Dorsolateral prefrontal cortex (tissue), 120 donors: ENCODE measurements at regions of chr1 and their contacts with region 1.

Region 1: GRCh38 chr1:61337981-61338848 is 255.9 kb downstream of the NFIA start:
- DNase-seq: peak; percentile 46 to 89 (median 79)
- H3K4me3 ChIP-seq: peak overlapping the region in 54 of 59 donors; percentile 0 to 59 (median 26)
- H3K27ac ChIP-seq: peak overlapping the region; percentile 17 to 88 (median 74)
- H3K27me3 ChIP-seq: no peaks in the 10 kb centered on the region
- CTCF ChIP-seq: peak; percentile 66 to 95 (median 87)

Region 2: DNA sequence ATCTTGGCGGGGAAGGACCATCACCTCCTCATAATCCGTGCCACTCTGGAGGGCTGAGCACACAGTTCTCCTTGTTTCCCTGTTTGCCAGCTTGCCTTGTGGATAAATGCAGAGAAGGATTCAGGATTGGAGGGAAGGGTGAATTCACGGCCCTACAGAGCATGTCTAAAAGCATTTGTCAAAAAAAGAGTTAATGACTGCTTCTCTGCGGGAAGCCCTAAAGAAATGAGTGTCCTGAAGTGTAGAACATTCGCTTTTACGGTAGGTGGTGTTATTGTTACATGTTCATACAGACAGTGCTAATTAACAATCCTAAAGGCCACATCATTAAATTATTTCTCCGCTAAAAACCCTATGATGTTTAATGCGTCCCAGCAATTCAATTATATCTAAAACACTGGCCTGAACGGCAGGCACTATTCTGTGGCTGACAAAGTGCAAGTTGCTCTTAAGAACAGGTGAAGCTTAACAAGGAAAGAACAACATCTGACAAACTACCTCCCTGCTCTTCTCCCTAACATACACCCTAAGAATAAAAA is 368.2 kb before region 1 on chr1:
- intact Hi-C with region 1: loop called (anchors 2 to 10 kb)
- DNase-seq: peak in 1 of 10 donors; percentile 4
- H3K4me3 ChIP-seq: peak overlapping the region in 38 of 59 donors; percentile 4 to 57 (median 24)
- H3K27ac ChIP-seq: peak overlapping the region in 53 of 59 donors; percentile 7 to 90 (median 72)
- H3K27me3 ChIP-seq: no peaks in the 10 kb centered on the region
- CTCF ChIP-seq: peak; percentile 27 to 86 (median 66)

Region 3: DNA sequence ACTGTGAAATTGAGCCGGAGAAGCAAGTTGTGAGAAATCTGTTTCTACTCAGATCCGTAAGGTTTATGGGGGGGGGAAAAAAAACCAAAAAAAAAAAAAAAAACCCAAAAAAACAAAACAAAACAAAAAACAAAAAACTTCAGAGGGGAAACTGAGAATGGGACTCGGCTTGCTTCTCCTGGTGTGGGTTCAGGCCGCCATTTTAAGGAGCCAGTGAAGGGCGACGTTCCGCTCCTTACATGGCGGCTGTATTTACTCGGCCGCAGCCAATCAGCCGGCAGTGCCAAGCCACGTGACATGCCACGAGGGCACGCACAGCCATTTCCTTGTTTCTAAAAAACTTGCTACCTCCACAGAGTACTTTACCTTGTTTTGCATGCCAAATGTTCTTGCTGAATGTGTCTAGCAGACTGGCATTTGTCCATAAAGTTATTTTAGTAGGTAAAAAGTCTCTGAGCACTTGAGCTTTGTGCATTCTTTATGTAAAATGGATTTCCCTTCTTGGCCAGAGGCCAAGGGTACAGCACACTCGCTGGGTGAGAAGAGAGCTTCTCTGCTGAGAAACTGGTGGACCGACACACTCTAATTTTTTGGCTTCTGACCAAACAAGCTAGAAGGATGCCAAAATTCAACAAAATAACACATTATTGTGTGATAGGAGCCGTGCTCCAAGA is 154.0 kb before region 1 on chr1:
- intact Hi-C with region 1: loop called in 1 of 2 experiments (anchors 5 kb)
- DNase-seq: peak; percentile 86 to 97 (median 94)
- H3K4me3 ChIP-seq: peak overlapping the region; percentile 39 to 73 (median 56)
- H3K27ac ChIP-seq: peak overlapping the region; percentile 83 to 98 (median 96)
- H3K27me3 ChIP-seq: no peaks in the 10 kb centered on the region
- CTCF ChIP-seq: peak in 11 of 56 donors; percentile 1 to 19 (median 14)

Region 4: DNA sequence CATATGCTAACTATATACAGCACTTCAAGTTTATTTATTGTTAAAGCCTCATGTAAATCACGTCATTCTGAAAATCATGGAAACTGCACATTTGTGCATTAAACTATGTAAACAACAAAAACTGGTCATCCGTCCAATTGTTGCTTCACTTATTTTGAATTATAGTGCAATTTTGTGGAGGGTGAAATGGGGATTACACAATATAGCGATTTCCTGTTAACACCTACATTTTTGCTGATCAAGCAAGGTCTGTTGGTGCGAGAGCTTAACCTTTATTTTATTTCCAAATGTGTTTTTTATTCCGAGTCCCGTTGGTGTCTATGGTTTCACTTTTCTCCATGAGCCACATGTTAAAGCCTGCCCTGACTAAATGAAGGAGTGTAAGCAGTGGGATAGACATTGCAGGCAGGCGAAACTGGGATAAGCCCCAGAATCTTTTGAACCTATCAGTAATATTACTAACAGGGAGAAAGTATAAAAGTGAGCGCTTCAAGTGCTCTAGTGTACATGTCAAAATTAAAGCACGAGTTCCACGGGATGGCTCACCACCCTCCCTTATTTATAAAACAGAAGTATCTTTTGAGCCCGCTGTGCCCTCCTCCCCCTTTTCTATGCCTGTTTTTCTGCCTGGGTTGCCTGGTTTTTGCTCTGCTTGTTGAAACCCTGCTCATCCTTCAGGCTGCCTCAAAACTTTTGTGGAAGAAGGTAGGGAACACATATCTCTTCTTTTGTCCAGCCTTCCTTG is 135.2 kb before region 1 on chr1:
- intact Hi-C with region 1: no loop called
- DNase-seq: no peak
- H3K4me3 ChIP-seq: peak overlapping the region in 47 of 59 donors; percentile 3 to 56 (median 30)
- H3K27ac ChIP-seq: peak overlapping the region in 26 of 59 donors; percentile 1 to 66 (median 34)
- H3K27me3 ChIP-seq: no peaks in the 10 kb centered on the region
- CTCF ChIP-seq: no peak

Region 5: DNA sequence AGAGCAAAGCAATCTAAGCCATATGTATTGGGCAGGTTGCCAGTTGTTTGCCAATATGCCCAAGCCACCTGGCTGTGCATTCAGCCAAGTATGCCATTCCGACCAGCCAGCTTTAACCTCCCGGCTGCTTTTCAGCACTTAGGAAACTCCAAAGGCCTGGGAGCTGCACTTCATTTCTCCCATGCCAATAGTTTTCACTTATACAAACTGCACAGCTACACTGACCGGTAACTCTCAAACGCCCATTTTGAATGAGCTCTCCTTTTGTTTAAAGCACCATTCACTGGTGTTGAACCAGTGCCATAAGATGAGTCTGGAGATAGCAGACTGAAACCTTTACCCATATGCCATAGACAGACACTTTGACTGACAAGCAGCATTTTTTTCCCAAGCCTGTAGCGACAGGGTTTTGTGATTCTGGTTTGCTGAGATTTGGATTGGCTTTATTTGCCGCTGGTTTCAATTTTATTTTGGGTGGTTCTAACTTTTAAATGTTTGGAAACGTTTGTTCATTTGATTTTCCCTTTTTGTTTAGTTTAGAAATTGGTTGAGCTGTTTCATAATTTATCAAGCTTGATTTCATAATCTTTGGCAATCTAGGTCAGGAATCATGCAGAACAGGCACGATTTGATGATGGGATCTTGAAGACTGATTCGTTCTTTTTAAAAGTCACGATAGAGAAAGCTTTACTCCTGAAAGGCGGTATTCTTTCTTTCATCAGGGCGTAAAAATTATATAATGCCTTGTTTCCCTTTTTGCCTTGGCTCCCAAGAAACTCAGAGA is 111.2 kb before region 1 on chr1:
- intact Hi-C with region 1: loop called in 1 of 2 experiments (anchors 10 kb)
- DNase-seq: peak in 1 of 10 donors; percentile 80
- H3K4me3 ChIP-seq: peak overlapping the region in 6 of 59 donors; percentile 8 to 26 (median 14)
- H3K27ac ChIP-seq: peak overlapping the region in 18 of 59 donors; percentile 1 to 63 (median 27)
- H3K27me3 ChIP-seq: no peaks in the 10 kb centered on the region
- CTCF ChIP-seq: no peak

Region 6: DNA sequence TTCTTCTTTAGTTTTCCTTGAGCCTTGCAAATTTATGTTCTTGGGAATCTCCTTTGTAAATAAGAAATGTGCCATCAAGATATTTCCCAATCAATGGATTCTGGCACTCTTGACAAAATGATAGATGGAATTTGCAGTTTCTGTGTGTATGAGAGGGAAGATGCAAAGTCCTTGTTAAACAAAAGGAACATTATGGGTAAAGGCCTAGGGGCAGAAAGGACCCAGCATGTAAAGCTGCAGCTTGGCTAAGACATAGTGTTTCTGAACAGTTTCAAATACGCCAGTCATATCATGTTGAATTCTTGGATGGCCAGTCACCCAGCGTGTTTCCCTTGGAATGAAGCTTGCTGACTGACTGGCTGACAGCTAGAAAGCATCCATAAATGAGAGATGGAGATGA is 45.0 kb before region 1 on chr1:
- intact Hi-C with region 1: loop called in 1 of 2 experiments (anchors 5 kb)
- DNase-seq: no peak
- H3K4me3 ChIP-seq: no peak overlapping the region
- H3K27ac ChIP-seq: peak overlapping the region in 4 of 59 donors; percentile 10 to 28 (median 19)
- H3K27me3 ChIP-seq: no peaks in the 10 kb centered on the region
- CTCF ChIP-seq: no peak

Region 7: DNA sequence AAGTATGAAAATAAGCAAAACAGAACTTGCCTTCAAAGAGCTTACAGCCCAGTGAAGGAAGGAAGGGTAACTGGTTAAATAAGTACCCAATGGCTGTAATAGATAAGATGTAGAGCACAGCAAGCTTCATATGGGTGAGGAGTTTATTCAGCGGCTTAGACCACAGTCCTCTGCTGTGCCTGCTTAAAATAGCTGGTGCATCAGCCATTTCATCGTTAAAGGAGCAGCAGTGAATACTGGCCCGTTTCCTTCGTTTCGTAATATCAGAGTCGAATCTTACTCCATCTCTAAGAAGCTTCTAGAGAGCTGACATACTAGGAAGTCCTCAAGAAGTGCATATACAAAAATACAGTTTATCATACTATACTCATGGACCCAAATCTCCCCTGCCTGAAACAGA is 30.7 kb after region 1 on chr1:
- intact Hi-C with region 1: no loop called
- DNase-seq: peak in 1 of 10 donors; percentile 11
- H3K4me3 ChIP-seq: no peak overlapping the region
- H3K27ac ChIP-seq: no peak overlapping the region
- H3K27me3 ChIP-seq: no peaks in the 10 kb centered on the region
- CTCF ChIP-seq: no peak

Region 8: GRCh38 chr1:61626816-61627215 is 288.6 kb after region 1 on chr1:
- intact Hi-C with region 1: no loop called
- DNase-seq: no peak
- H3K4me3 ChIP-seq: no peak overlapping the region
- H3K27ac ChIP-seq: no peak overlapping the region
- H3K27me3 ChIP-seq: no peaks in the 10 kb centered on the region
- CTCF ChIP-seq: no peak

Region 9: DNA sequence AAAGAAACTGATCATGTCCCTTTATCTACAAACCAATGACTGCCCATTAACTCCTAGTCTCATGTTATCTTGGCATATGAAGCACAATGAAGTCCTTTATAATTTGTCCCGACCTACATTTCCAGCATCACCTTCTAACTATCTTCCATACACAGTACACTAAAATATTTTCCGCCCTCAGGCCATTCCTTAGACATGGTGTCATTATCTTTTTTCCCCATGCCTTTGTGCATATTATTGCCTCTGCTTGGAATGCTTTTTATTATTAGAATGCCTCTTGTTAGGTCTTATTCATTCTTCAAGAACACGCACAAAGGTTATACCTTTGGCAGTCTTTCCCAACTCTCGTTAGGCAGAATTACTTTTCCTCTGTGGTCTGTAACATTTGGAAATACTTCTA is 1485.3 kb after region 1 on chr1:
- intact Hi-C with region 1: no loop called
- DNase-seq: no peak
- H3K4me3 ChIP-seq: no peak overlapping the region
- H3K27ac ChIP-seq: peak overlapping the region in 1 of 59 donors; percentile 45
- H3K27me3 ChIP-seq: no peaks in the 10 kb centered on the region
- CTCF ChIP-seq: no peak